Activated CD8-positive, alpha-beta T cell treated with anti-CD3 and anti-CD28 coated beads, Interleukin-2, amount 10 ng/mL, durations not matched to agents 7 days and 5 days (primary cell): ENCODE measurements at regions of chr17 and their contacts with region 1.

Region 1: DNA sequence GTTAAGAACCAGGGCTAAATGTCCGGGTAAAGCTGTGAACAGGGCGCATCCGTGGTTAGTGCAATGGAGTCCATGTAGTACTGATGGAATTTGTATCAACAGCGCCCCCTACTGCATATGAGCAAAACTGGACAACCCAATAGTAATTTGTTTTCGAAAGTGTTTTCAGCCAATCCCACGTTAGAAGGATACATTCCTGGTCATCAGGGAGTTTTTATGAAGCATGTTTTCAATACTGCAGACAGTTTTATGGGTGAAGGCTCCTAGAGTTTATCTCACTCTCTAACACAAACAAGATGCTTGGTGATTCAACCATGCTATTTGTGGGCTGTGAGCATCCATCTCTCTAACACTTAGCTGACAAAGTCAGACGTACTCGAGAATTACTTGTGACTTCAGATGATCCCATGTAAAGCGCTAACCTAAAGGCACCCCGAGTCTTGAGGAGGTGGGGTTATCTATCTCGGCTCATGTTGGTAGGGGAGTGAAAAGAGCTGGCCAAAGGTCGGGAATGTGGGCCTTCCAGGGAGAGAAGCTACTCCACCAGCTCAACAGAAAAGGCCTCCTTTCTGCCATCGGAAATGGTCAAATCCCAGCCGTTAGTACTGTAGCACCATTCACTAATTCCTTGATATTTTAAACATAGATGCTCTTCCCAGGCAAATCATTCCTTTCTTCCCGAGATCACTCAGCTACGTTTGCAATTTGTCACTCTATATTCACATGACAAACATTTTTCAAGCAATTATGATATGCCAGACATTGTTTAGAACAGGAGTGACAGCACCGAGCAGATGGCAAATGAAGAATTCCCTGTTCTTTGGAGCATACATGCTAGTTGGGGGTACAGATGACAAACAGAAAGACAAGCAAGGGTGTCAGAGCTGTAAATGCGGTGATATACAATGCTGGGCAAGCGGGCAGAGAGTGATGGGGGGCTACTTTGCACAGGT is 46.9 kb upstream of the HNF1B start:
- DNase-seq: peak; percentile 73
- ATAC-seq: peak; percentile 90
- H3K4me3 Mint-ChIP-seq: no peak overlapping the region
- H3K27ac Mint-ChIP-seq: no peak overlapping the region
- H3K4me1 Mint-ChIP-seq: peaks cover 4% of the 10 kb centered on the region
- H3K27me3 Mint-ChIP-seq: peaks cover 17% of the 10 kb centered on the region

Region 2: DNA sequence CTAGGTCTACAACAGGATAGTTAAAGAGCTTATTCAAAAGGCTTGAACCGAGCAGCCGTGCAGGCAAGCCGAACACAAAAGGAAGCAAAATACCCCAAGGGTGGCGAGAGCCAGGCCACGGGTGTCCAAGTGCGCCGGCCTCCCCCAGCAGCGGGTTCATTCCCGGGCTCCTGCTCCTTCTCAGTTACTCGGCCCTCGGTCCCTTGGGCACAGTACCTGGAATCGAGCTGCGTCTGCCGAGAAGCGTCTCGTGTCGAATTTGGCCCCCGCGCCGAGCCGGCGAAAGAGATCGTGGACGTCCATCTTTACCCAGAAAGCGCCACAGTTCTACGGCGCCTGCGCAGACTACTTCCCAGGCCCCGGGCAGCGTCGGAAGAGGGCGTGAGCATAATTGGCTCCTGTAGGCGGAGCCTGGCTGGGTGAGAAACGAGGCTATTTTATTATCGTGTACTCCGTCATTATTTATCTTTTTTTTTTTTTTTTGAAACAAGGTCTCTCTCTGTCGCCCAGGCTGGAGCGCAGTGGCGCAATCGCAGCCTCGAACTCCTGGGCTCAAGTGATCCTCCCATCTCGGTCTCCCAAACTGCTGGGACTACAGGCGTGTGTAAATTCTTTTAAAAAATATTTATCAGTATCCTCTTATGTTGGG is 148.5 kb before region 1 on chr17 and contains the start of gene DDX52:
- CTCF ChIA-PET with region 1: interaction called, 15 read pairs
- POLR2A ChIA-PET with region 1: no interaction called
- DNase-seq: peak; percentile 93
- ATAC-seq: peak; percentile 99
- H3K4me3 Mint-ChIP-seq: peak within 1 kb of the TSS; percentile 95
- H3K27ac Mint-ChIP-seq: peak within 1 kb of the TSS; percentile 91
- H3K4me1 Mint-ChIP-seq: peaks cover 32% of the 10 kb centered on the region
- H3K27me3 Mint-ChIP-seq: peaks cover 37% of the 10 kb centered on the region
- total RNA-seq, gene DDX52: 28.2 to 28.6 TPM

Region 3: DNA sequence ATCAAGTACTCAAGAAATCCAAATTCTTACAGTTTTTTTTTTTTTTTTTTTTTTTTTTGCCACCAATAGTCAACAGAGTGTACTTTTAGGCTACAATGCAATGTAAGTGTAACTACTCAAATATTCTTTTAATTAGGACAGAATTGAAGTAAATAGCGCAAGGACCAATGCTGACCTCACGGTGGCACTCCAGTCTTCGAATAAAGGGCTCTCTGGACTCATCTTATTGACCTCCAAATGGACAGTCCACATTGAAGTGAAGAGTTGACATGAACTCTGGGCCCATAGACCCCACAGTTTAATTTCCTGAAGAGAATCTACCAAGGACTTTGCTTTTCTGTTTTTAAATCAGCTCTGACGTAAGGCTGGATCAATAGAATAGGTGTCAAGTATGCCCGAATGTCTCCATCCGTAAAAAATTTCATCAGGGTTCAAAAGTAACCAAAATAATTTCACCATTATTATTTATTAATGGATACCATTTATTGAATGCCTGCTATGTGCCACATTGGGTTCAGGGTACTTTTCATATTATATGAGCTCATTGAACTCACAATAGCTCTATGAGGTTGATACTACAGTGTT is 141.2 kb before region 1 on chr17:
- CTCF ChIA-PET with region 1: interaction called, 15 read pairs
- POLR2A ChIA-PET with region 1: no interaction called
- DNase-seq: no peak
- ATAC-seq: no peak
- H3K4me3 Mint-ChIP-seq: no peak overlapping the region
- H3K27ac Mint-ChIP-seq: no peak overlapping the region
- H3K4me1 Mint-ChIP-seq: no peaks in the 10 kb centered on the region
- H3K27me3 Mint-ChIP-seq: peaks cover 55% of the 10 kb centered on the region

Region 4: GRCh38 chr17:37701496-37701898 is 90.2 kb before region 1 on chr17:
- CTCF ChIA-PET with region 1: interaction called, 61 read pairs
- POLR2A ChIA-PET with region 1: no interaction called
- DNase-seq: peak; percentile 65
- ATAC-seq: peak; percentile 71
- H3K4me3 Mint-ChIP-seq: no peak overlapping the region
- H3K27ac Mint-ChIP-seq: no peak overlapping the region
- H3K4me1 Mint-ChIP-seq: peaks cover 8% of the 10 kb centered on the region
- H3K27me3 Mint-ChIP-seq: peaks cover 28% of the 10 kb centered on the region

Region 5: GRCh38 chr17:37770631-37771518 is 20.8 kb before region 1 on chr17:
- CTCF ChIA-PET with region 1: interaction called, 19 read pairs
- POLR2A ChIA-PET with region 1: no interaction called
- DNase-seq: peak; percentile 53
- ATAC-seq: no peak
- H3K4me3 Mint-ChIP-seq: no peak overlapping the region
- H3K27ac Mint-ChIP-seq: no peak overlapping the region
- H3K4me1 Mint-ChIP-seq: peaks cover 31% of the 10 kb centered on the region
- H3K27me3 Mint-ChIP-seq: peaks cover 13% of the 10 kb centered on the region

Region 6: GRCh38 chr17:37816950-37817349 is 25.2 kb after region 1 on chr17:
- CTCF ChIA-PET with region 1: interaction called, 19 read pairs
- POLR2A ChIA-PET with region 1: no interaction called
- DNase-seq: no peak
- ATAC-seq: no peak
- H3K4me3 Mint-ChIP-seq: no peak overlapping the region
- H3K27ac Mint-ChIP-seq: no peak overlapping the region
- H3K4me1 Mint-ChIP-seq: peaks cover 24% of the 10 kb centered on the region
- H3K27me3 Mint-ChIP-seq: peaks cover 21% of the 10 kb centered on the region